Heart left ventricle (tissue), 16 donors: ENCODE measurements at regions of chr18 and their contacts with region 1.

Region 1: GRCh38 chr18:5475267-5475666 is 68.5 kb downstream of the EPB41L3 start:
- DNase-seq: no peak
- ATAC-seq: peak in 3 of 4 donors; percentile 45 to 75 (median 64)
- H3K4me3 ChIP-seq: no peak overlapping the region
- H3K27ac ChIP-seq: peak overlapping the region in 2 of 12 donors; percentile 7 to 29
- H3K4me1 ChIP-seq: peaks cover 0 to 14% (median 0%) of the 10 kb centered on the region in 12 donors
- H3K27me3 ChIP-seq: no peaks in the 10 kb centered on the region
- CTCF ChIP-seq: no peak
- POLR2A ChIP-seq: no peak

Region 2: DNA sequence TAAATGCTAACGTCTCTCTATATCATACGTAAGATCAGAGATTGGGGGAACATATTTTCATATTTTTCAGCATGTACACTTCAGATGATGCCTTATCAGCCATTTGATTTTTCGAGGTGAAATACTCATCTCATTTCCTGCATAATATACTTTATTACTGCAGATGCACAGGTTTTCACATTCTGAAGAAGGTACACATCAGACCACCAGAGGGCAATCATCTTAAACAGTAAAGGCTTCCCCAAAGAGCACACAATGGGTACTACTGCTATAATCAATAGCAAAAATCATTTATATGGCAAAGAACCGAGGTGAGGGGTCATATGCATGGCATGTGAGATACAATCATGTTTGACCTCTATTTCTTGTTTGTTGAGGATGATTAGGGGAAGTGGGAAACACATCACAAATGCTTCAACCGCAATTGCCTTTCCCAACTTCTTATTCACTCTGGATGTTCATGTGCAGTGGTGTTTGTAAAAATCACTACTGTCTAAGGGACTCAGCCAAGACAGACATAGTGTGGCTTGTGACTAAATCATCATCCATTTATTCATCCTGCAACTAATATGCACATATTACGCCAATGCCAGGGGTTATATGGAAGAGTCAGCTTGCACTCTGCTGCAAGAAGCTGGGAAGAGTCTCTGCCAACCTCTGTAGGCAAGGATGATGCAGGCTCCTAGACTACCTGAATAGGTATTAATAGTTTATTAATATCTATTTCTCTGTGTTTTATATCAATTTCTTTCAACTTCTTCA is 50.2 kb before region 1 on chr18:
- intact Hi-C with region 1: no loop called
- DNase-seq: no peak
- ATAC-seq: no peak
- H3K4me3 ChIP-seq: no peak overlapping the region
- H3K27ac ChIP-seq: no peak overlapping the region
- H3K4me1 ChIP-seq: peaks cover 0 to under 1% (median 0%) of the 10 kb centered on the region in 12 donors
- H3K27me3 ChIP-seq: no peaks in the 10 kb centered on the region
- CTCF ChIP-seq: peak in 8 of 12 donors; percentile 18 to 48 (median 36)
- POLR2A ChIP-seq: no peak

Region 3: DNA sequence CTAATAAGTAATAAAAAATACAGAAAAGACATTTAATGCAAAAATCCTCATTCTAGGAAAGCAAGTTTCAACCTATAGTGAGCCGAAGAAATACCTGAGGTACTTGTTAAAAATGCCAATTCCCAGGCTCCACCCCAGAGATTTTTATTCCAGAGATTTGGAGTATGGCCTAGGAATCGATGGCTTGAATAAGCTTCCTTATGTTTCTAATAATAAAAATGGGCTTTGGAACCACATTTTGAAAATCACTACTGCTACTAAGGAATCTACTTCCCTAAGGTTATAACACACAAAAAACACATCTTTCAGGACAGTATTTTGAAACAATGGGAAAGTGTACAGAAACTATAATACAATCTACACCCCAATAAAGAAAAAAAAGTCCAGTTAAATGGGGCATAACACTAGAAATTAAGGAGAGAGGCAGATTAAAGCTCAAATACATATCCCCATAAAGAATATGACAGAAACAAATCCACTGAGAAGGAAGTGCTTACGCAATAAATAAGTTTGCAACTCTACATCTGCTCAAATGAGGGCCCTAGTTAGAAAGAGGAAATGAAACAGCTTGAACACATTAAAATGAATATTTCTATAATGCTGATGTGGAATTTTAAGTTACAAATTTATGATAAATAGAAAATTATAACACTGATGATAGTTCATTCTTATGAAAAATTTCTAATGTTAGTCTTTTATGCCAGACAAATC is 35.1 kb before region 1 on chr18:
- intact Hi-C with region 1: loop called in 1 of 10 experiments (anchors 2 kb)
- DNase-seq: no peak
- ATAC-seq: peak in 1 of 4 donors; percentile 56
- H3K4me3 ChIP-seq: no peak overlapping the region
- H3K27ac ChIP-seq: peak overlapping the region in 3 of 12 donors; percentile 5 to 75 (median 20)
- H3K4me1 ChIP-seq: peaks cover 0 to 29% (median 0%) of the 10 kb centered on the region in 12 donors
- H3K27me3 ChIP-seq: no peaks in the 10 kb centered on the region
- CTCF ChIP-seq: no peak
- POLR2A ChIP-seq: no peak

Region 4: DNA sequence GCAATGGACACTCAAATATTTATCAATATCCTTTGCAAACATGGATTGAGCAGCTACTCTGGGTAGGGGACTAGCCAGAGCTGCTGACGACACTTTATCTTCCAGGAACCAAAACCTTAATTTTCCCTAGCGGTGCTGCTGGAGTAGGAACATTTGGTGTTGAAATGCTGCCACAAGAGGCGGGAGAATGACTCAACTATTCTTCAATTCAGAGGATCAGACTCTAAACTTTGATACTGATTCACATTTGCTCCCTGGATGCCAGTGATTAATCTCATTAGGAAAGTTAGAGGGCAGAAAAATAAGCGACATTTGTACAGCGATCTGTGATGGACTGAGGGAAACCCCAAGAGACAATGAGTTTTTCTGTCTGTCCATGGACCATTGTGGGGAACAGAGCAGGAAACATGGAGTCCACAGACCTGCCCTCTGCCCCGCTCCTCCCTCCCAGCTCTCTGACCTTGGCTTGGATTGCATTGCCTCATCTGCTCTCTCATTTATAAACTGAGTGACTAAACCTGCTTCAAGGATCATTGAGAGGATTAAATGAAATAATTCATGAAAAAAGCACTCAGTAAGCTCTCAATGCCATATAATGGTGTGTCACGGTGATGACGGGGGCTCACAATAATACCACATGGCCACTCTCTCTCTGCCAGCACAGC is 81.2 kb after region 1 on chr18:
- intact Hi-C with region 1: no loop called
- DNase-seq: peak in 3 of 5 donors; percentile 23 to 45 (median 44)
- ATAC-seq: peak; percentile 42 to 90 (median 59)
- H3K4me3 ChIP-seq: no peak overlapping the region
- H3K27ac ChIP-seq: peak overlapping the region in 2 of 12 donors; percentile 16 to 33
- H3K4me1 ChIP-seq: peaks cover 0 to 5% (median 0%) of the 10 kb centered on the region in 12 donors
- H3K27me3 ChIP-seq: no peaks in the 10 kb centered on the region
- CTCF ChIP-seq: peak in 1 of 12 donors; percentile 5
- POLR2A ChIP-seq: no peak

Region 5: DNA sequence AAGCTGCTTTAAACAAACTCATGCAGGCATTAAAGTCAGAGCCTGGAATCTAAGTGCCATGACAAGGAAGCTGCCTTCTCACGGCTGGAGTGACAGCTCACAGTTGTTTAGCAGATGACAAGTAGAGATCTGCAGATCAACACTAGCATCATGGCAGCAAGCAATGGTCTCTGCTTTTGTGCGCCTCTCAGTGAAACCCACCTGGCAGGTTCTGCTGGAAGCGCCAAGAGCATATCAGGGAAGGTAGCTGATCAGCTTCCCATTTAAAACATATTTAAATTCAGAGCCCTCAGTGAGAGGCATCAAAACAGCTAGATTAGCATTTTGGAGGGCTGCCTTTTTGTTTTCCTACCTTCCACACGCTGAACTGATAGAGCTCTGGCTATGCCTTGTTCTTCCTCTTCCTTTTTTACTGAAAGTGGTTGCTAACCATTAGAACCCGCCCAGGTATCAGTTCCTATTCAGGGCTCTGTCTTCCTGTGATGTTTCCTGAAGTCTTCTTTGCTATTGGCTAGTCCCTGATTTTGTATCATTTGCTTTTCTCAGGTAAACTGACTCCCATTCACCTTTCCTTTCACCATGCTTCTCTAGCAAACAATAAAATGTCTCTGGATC is 349.2 kb after region 1 on chr18:
- intact Hi-C with region 1: no loop called
- DNase-seq: no peak
- ATAC-seq: no peak
- H3K4me3 ChIP-seq: no peak overlapping the region
- H3K27ac ChIP-seq: no peak overlapping the region
- H3K4me1 ChIP-seq: no peaks in the 10 kb centered on the region
- H3K27me3 ChIP-seq: peaks cover 0 to 39% (median 0%) of the 10 kb centered on the region in 9 donors
- CTCF ChIP-seq: no peak
- POLR2A ChIP-seq: no peak